A549 (cell line): ENCODE measurements at regions of chr16 and their contacts with region 1.

Region 1: GRCh38 chr16:66608241-66609138 is 4.0 kb downstream of the CMTM3 start:
- DNase-seq: peak; percentile 85 to 94
- ATAC-seq: peak; percentile 56 to 76
- H3K4me3 ChIP-seq: no peak overlapping the region
- H3K27ac ChIP-seq: peak overlapping the region; percentile 19 to 86; a peak in 3 of 6 replicates
- H3K4me1 ChIP-seq: peaks cover 28% of the 10 kb centered on the region
- CTCF ChIP-seq: peak; percentile 90
- EP300 ChIP-seq: no peak
- POLR2A ChIP-seq: no peak
- RAD21 ChIP-seq: peak; percentile 67 to 70

Region 2: DNA sequence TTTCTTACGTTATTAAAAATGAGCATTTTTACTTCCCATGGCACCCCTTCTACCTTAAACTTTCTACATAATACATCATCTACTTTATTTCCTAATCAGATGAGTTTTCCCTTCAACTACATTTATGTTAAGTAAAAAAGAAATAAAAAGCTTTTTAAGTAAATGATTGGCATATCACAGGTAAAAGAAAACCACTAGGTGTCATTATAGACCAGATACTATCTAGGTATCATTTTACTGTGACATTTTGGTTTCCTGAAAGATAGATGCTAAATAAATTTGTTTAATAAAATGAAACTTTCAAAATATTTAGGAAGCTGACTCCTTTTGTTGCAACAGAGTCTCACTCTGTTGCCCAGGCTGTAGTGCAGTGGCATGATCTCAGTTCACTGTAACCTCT is 46.1 kb before region 1 on chr16:
- CTCF ChIA-PET with region 1: interaction called, 34 read pairs
- POLR2A ChIA-PET with region 1: interaction called, 6 read pairs
- DNase-seq: no peak
- ATAC-seq: no peak
- H3K4me3 ChIP-seq: no peak overlapping the region
- H3K27ac ChIP-seq: no peak overlapping the region
- H3K4me1 ChIP-seq: no peaks in the 10 kb centered on the region
- CTCF ChIP-seq: peak; percentile 33; the same call in 2 of the 3 replicates
- EP300 ChIP-seq: no peak
- POLR2A ChIP-seq: no peak
- RAD21 ChIP-seq: peak; percentile 34 to 38; a peak in 3 of 5 replicates

Region 3: GRCh38 chr16:66596986-66597848 is 11.3 kb before region 1 on chr16:
- CTCF ChIA-PET with region 1: interaction called, 19 read pairs
- POLR2A ChIA-PET with region 1: no interaction called
- DNase-seq: no peak
- ATAC-seq: no peak
- H3K4me3 ChIP-seq: no peak overlapping the region
- H3K27ac ChIP-seq: no peak overlapping the region
- H3K4me1 ChIP-seq: no peaks in the 10 kb centered on the region
- CTCF ChIP-seq: no peak
- EP300 ChIP-seq: no peak
- POLR2A ChIP-seq: no peak
- RAD21 ChIP-seq: no peak

Region 4: GRCh38 chr16:66650707-66651473 is 42.4 kb after region 1 on chr16:
- CTCF ChIA-PET with region 1: interaction called, 60 read pairs
- POLR2A ChIA-PET with region 1: no interaction called
- DNase-seq: peak; percentile 79 to 84
- ATAC-seq: peak; percentile 97 to 99
- H3K4me3 ChIP-seq: peak overlapping the region; percentile 43
- H3K27ac ChIP-seq: peak overlapping the region; percentile 56 to 61; a peak in 4 of 6 replicates
- H3K4me1 ChIP-seq: peaks cover 8% of the 10 kb centered on the region; the same call in 2 of the 3 replicates
- CTCF ChIP-seq: peak; percentile 86
- EP300 ChIP-seq: no peak
- POLR2A ChIP-seq: no peak
- RAD21 ChIP-seq: peak; percentile 44 to 61; a peak in 2 of 5 replicates

Region 5: GRCh38 chr16:66751303-66751991 is 143.0 kb after region 1 on chr16 and contains the start of gene DYNC1LI2:
- CTCF ChIA-PET with region 1: interaction called, 12 read pairs
- POLR2A ChIA-PET with region 1: no interaction called
- DNase-seq: peak; percentile 73 to 80
- ATAC-seq: peak; percentile 91 to 95
- H3K4me3 ChIP-seq: peak within 1 kb of the TSS; percentile 92
- H3K27ac ChIP-seq: peak within 1 kb of the TSS; percentile 92 to 96
- H3K4me1 ChIP-seq: peaks cover 16% of the 10 kb centered on the region
- CTCF ChIP-seq: peak; percentile 91
- EP300 ChIP-seq: no peak
- POLR2A ChIP-seq: peak; percentile 55
- RAD21 ChIP-seq: peak; percentile 9 to 59; a peak in 4 of 5 replicates
- polyA plus RNA-seq, gene DYNC1LI2: 112 and 128 TPM in 2 replicates